Cardiac septum (tissue), 1 donor: ENCODE measurements at regions of chr16 and their contacts with region 1.

Region 1: GRCh38 chr16:73095885-73096421 is 48.0 kb upstream of the ZFHX3 start:
- DNase-seq: no peak

Region 2: GRCh38 chr16:73068541-73069401 is 27.2 kb before region 1 on chr16:
- intact Hi-C with region 1: loop called (anchors 2 kb)
- DNase-seq: no peak

Region 3: GRCh38 chr16:73354434-73354833 is 258.5 kb after region 1 on chr16:
- intact Hi-C with region 1: loop called (anchors 10 kb)
- DNase-seq: no peak

Region 4: DNA sequence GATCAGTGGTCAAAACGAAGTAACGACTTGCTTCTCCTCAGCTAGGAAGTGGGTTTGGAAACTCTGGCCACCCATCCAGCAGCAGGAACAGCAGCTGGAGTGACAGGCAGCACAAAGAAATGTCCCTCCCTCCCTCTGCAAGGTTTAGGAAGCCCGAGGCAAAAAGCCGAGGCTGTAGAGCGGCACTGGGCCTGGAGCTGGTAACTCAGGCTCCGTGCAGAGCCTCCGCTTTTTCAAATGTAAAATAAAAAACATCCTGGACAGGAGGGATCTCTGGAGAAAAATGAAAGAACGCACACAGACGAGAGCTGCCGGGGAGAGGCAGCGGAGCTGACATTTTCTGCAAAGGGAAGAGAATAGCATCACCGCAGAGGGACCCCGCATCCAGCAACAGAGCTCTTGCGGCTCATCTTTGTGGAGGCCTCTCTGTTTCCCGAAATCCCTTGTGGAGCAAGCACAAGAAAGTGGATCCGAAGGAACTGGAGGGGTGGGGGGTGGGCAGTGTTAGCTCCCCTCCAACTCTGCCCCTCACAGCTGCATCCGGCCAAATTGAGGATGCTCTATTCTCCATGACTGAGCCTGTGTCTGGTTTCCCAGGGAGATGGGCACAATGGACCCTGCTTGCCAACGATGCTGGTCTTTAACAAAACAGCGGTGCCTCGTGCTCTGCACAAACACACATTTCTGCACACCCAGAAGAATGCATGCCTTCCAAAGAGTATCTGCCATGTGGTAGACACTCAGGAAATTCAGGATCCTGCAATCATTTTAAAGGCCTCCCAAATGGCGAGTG is 287.4 kb after region 1 on chr16:
- intact Hi-C with region 1: no loop called
- DNase-seq: no peak